ENCODE measurements at regions of chr14 and their contacts with region 1.

Region 1: DNA sequence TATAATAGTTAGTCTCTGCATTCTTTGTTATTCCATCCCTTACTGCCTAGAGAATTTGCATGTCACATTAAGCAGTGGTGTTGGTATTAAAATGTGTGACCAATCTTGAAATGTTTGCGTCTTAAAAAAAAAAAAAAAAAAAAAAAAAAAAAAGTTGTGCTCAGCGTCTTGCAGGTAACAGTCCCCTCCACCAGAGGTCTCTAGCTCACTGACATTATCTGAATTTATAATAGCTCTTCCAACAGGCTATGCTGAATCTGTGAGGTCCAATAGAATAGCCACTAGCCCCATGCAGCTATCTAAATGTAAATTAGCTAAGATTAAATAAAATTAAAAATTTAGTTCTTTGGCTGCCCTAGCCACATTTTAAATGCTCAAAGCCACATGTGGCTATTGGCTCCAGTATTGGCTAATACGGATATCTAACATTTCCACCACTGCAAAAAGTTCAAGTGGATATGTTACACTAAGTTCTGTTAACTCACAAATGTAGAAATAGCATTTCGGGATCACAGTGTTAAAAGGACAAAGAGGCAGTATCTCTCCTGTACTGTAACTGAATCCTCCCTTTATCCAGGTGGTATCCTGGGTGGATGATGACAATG is 28.7 kb downstream of the NKX2-8 start:
- DNase-seq: no peak
- ATAC-seq: peak in 1 of 2 donors; percentile 56
- H3K4me3 ChIP-seq: no peak overlapping the region
- H3K27ac ChIP-seq: no peak overlapping the region
- H3K4me1 ChIP-seq: no peaks in the 10 kb centered on the region
- H3K27me3 ChIP-seq: no peaks in the 10 kb centered on the region
- CTCF ChIP-seq: peak in 3 of 5 experiments; percentile 29 to 64 (median 48)
- POLR2A ChIP-seq: no peak

Region 2: GRCh38 chr14:36207500-36207899 is 346.3 kb before region 1 on chr14:
- in situ Hi-C with region 1: no loop called
- intact Hi-C with region 1: no loop called
- DNase-seq: no peak
- ATAC-seq: no peak
- H3K4me3 ChIP-seq: no peak overlapping the region
- H3K27ac ChIP-seq: no peak overlapping the region
- H3K4me1 ChIP-seq: no peaks in the 10 kb centered on the region
- H3K27me3 ChIP-seq: no peaks in the 10 kb centered on the region
- CTCF ChIP-seq: no peak
- POLR2A ChIP-seq: no peak

Region 3: GRCh38 chr14:36604757-36605505 is 51.2 kb after region 1 on chr14:
- in situ Hi-C with region 1: no loop called
- intact Hi-C with region 1: loop called (anchors 5 kb)
- DNase-seq: no peak
- ATAC-seq: peak; percentile 54 to 56
- H3K4me3 ChIP-seq: no peak overlapping the region
- H3K27ac ChIP-seq: no peak overlapping the region
- H3K4me1 ChIP-seq: no peaks in the 10 kb centered on the region
- H3K27me3 ChIP-seq: peaks cover 0 to 16% (median 15%) of the 10 kb centered on the region in 3 donors
- CTCF ChIP-seq: peak; percentile 32 to 71 (median 45)
- POLR2A ChIP-seq: no peak

Region 4: GRCh38 chr14:36619853-36620252 is 66.1 kb after region 1 on chr14:
- in situ Hi-C with region 1: no loop called
- intact Hi-C with region 1: no loop called
- DNase-seq: no peak
- ATAC-seq: no peak
- H3K4me3 ChIP-seq: no peak overlapping the region
- H3K27ac ChIP-seq: no peak overlapping the region
- H3K4me1 ChIP-seq: no peaks in the 10 kb centered on the region
- H3K27me3 ChIP-seq: no peaks in the 10 kb centered on the region
- CTCF ChIP-seq: no peak
- POLR2A ChIP-seq: no peak

Measured in gastrocnemius medialis (tissue), 4 donors.